Panc1 (cell line): ENCODE measurements at regions of chr1 and their contacts with region 1.

Region 1: DNA sequence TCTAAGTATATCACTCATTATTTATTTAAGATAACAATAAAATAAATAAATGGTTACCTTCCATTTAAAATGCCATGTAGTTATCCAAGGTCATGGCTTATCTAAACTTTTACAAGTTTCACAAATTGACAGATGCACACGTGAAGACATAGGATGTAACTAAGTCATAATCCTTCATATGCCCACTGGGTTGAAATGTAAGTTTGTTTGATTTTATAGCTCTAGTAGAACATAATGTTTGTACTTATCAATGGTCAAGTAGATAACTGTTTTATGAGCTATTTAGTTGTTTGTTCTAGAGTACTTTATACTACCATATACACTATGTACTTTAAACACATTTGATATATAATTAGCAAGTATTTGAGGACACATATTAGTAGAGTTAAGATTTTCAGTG is 43.0 kb downstream of the ITGB3BP start:
- DNase-seq: no peak
- ATAC-seq: no peak
- H3K4me3 ChIP-seq: no peak overlapping the region
- H3K27ac ChIP-seq: no peak overlapping the region
- H3K4me1 ChIP-seq: no peaks in the 10 kb centered on the region
- H3K27me3 ChIP-seq: no peaks in the 10 kb centered on the region
- CTCF ChIP-seq: no peak

Region 2: GRCh38 chr1:63498106-63498505 is 18.0 kb after region 1 on chr1:
- CTCF ChIA-PET with region 1: no interaction called
- POLR2A ChIA-PET with region 1: interaction called, 12 read pairs
- in situ Hi-C with region 1: no loop called
- intact Hi-C with region 1: no loop called
- DNase-seq: no peak
- ATAC-seq: no peak
- H3K4me3 ChIP-seq: no peak overlapping the region
- H3K27ac ChIP-seq: no peak overlapping the region
- H3K4me1 ChIP-seq: no peaks in the 10 kb centered on the region
- H3K27me3 ChIP-seq: no peaks in the 10 kb centered on the region
- CTCF ChIP-seq: no peak

Region 3: DNA sequence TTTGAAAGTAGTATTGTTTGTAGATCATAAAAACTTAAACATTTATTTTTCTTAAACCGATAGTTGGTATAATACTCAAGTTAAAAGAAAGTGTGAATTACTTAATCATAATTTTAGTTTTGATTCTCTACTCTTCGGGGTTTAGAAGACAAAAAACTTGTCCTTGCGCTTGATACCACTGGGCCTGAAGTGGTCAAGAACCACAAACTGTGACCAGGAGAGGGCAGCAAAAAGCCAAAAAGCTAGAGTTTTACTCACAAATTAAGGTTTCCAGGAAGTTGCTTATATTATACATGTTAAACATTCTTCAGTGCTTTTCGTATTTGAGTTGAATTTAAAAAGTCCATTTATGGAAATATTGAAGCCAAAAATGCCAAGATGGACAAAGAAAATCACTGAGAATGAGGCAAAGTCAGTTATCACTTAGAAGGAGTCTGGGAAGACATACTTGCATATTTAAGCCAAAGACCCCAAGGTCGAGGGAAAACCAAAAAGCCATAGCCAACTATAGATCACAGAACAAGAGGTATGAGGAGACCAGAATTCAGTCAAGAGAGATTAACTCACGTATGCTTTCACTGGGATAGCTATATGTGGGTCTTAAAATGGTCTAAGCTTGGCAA is 77.4 kb after region 1 on chr1:
- CTCF ChIA-PET with region 1: no interaction called
- POLR2A ChIA-PET with region 1: no interaction called
- in situ Hi-C with region 1: no loop called
- intact Hi-C with region 1: no loop called
- DNase-seq: peak; percentile 22
- ATAC-seq: 0 out of 2 replicates have a peak, but pooled peaks have one; percentile 68
- H3K4me3 ChIP-seq: no peak overlapping the region
- H3K27ac ChIP-seq: no peak overlapping the region
- H3K4me1 ChIP-seq: no peaks in the 10 kb centered on the region
- H3K27me3 ChIP-seq: no peaks in the 10 kb centered on the region
- CTCF ChIP-seq: peak; percentile 71; the same call in 1 of the 2 replicates